AG04450 (cell line): ENCODE measurements at regions of chr6 and their contacts with region 1.

Region 1: GRCh38 chr6:31541658-31542521 is at the start of gene DDX39B:
- DNase-seq: peak; percentile 93
- H3K4me3 ChIP-seq: peak within 1 kb of the TSS; percentile 92
- H3K27ac ChIP-seq: peak within 1 kb of the TSS; percentile 95
- H3K27me3 ChIP-seq: no peaks in the 10 kb centered on the region
- CTCF ChIP-seq: no peak
- polyA plus RNA-seq, gene DDX39B: 434 and 480 TPM in 2 replicates

Region 2: DNA sequence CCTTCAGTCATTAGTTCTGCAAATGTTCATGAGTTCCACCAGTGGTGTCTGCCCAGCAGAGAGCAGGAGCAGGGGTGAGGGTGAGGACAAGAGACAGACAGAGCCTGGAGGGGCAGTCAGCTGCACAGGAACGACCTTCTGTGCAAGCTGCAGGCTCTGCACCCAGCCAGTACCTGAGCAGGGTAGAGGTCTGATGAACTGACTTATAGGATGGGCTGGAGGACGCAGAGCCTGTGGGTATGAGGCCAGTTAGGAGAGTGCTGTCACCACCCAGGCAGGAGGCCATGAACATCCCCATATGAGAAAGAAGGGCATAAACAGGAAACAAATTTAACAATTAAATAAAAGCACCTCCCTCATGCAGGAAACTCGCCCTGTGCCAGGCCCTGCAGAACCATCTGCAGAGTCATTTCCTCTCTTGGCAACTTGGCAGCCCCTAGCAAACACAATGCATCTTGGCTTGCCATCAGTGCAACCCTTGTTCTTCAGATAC is 447.5 kb before region 1 on chr6:
- CTCF ChIA-PET with region 1: no interaction called
- POLR2A ChIA-PET with region 1: no interaction called
- DNase-seq: no peak
- H3K4me3 ChIP-seq: no peak overlapping the region
- H3K27ac ChIP-seq: no peak overlapping the region
- H3K27me3 ChIP-seq: peaks cover 4% of the 10 kb centered on the region
- CTCF ChIP-seq: no peak

Region 3: GRCh38 chr6:31493875-31494694 is 47.8 kb before region 1 on chr6:
- CTCF ChIA-PET with region 1: interaction called, 17 read pairs
- POLR2A ChIA-PET with region 1: interaction called, 12 read pairs
- DNase-seq: no peak
- H3K4me3 ChIP-seq: peak overlapping the region; percentile 71
- H3K27ac ChIP-seq: peak overlapping the region; percentile 78
- H3K27me3 ChIP-seq: no peaks in the 10 kb centered on the region
- CTCF ChIP-seq: peak; percentile 87

Region 4: GRCh38 chr6:31509988-31510387 is 31.9 kb before region 1 on chr6:
- CTCF ChIA-PET with region 1: no interaction called
- POLR2A ChIA-PET with region 1: no interaction called
- DNase-seq: no peak
- H3K4me3 ChIP-seq: no peak overlapping the region
- H3K27ac ChIP-seq: no peak overlapping the region
- H3K27me3 ChIP-seq: no peaks in the 10 kb centered on the region
- CTCF ChIP-seq: no peak

Region 5: GRCh38 chr6:31525932-31526591 is 15.8 kb before region 1 on chr6:
- CTCF ChIA-PET with region 1: interaction called, 3 read pairs
- POLR2A ChIA-PET with region 1: interaction called, 24 read pairs
- DNase-seq: no peak
- H3K4me3 ChIP-seq: no peak overlapping the region
- H3K27ac ChIP-seq: no peak overlapping the region
- H3K27me3 ChIP-seq: no peaks in the 10 kb centered on the region
- CTCF ChIP-seq: no peak